Activated naive CD4-positive, alpha-beta T cell treated with anti-CD3 and anti-CD28 coated beads for 36 hours (primary cell): ENCODE measurements at regions of chr3 and their contacts with region 1.

Region 1: GRCh38 chr3:68249265-68249664 is 594.9 kb upstream of the SUCLG2 start:
- DNase-seq: peak; percentile 67
- H3K4me3 Mint-ChIP-seq: no peak overlapping the region
- H3K27ac Mint-ChIP-seq: no peak overlapping the region
- H3K4me1 Mint-ChIP-seq: peaks cover 11% of the 10 kb centered on the region
- H3K27me3 Mint-ChIP-seq: no peaks in the 10 kb centered on the region

Region 2: GRCh38 chr3:66998113-66998903 is 1251.0 kb before region 1 on chr3 and contains the start of gene KBTBD8:
- CTCF ChIA-PET with region 1: no interaction called
- intact Hi-C with region 1: loop called (anchors 10 kb)
- DNase-seq: peak; percentile 98
- H3K4me3 Mint-ChIP-seq: peak within 1 kb of the TSS; percentile 87
- H3K27ac Mint-ChIP-seq: peak within 1 kb of the TSS; percentile 95
- H3K4me1 Mint-ChIP-seq: peaks cover 27% of the 10 kb centered on the region
- H3K27me3 Mint-ChIP-seq: peaks cover 4% of the 10 kb centered on the region
- total RNA-seq, gene KBTBD8: 6.8 to 7.4 TPM

Region 3: GRCh38 chr3:67083277-67083676 is 1166.0 kb before region 1 on chr3:
- CTCF ChIA-PET with region 1: no interaction called
- intact Hi-C with region 1: loop called (anchors 2 kb)
- DNase-seq: peak; percentile 79
- H3K4me3 Mint-ChIP-seq: peak overlapping the region; percentile 61
- H3K27ac Mint-ChIP-seq: peak overlapping the region; percentile 94
- H3K4me1 Mint-ChIP-seq: peaks cover 31% of the 10 kb centered on the region
- H3K27me3 Mint-ChIP-seq: no peaks in the 10 kb centered on the region

Region 4: GRCh38 chr3:67349551-67350174 is 899.6 kb before region 1 on chr3:
- CTCF ChIA-PET with region 1: no interaction called
- intact Hi-C with region 1: loop called (anchors 1 kb)
- DNase-seq: peak; percentile 70
- H3K4me3 Mint-ChIP-seq: no peak overlapping the region
- H3K27ac Mint-ChIP-seq: no peak overlapping the region
- H3K4me1 Mint-ChIP-seq: peaks cover 17% of the 10 kb centered on the region
- H3K27me3 Mint-ChIP-seq: peaks cover 7% of the 10 kb centered on the region

Region 5: DNA sequence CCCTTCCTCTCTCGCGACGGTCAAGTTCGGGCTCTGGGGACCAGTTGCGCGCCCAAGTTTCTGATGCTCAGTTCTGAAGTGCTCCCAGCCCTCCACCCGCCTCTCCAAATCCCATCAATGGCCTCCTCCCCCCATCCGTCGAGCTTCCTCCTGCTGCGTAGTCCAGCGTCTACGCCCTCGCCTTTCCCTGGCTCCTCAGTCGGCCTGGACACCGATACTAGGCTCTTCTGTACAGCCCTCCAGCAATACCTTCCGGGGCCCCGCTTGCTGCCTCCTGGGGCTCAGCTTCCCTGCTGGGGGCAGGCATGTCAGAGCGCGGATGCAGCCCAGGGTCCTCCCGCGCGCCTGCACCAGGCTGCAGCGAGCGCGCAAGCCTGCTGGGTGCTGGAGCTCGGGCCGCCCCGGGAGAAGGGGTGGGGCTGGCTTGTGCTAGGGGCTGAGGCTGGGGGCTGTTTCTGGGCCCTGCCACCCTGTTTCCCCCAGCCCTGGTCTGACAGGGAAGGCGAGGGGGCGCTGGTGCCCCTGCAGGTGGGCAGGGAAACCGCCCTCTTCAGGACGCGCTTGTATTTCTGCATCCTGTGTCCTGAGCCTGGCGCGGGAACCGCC is 241.5 kb before region 1 on chr3:
- CTCF ChIA-PET with region 1: no interaction called
- intact Hi-C with region 1: loop called (anchors 5 kb)
- DNase-seq: peak; percentile 35
- H3K4me3 Mint-ChIP-seq: peak overlapping the region; percentile 86
- H3K27ac Mint-ChIP-seq: no peak overlapping the region
- H3K4me1 Mint-ChIP-seq: peaks cover 11% of the 10 kb centered on the region
- H3K27me3 Mint-ChIP-seq: peaks cover 2% of the 10 kb centered on the region

Region 6: GRCh38 chr3:68088216-68088615 is 161.0 kb before region 1 on chr3:
- CTCF ChIA-PET with region 1: no interaction called
- intact Hi-C with region 1: loop called (anchors 1 kb)
- DNase-seq: peak; percentile 72
- H3K4me3 Mint-ChIP-seq: no peak overlapping the region
- H3K27ac Mint-ChIP-seq: no peak overlapping the region
- H3K4me1 Mint-ChIP-seq: peaks cover 62% of the 10 kb centered on the region
- H3K27me3 Mint-ChIP-seq: no peaks in the 10 kb centered on the region